Activated naive CD4-positive, alpha-beta T cell treated with anti-CD3 and anti-CD28 coated beads for 36 hours (primary cell): ENCODE measurements at regions of chr4 and their contacts with region 1.

Region 1: GRCh38 chr4:108355186-108355901 is 186.6 kb upstream of the LEF1 start:
- DNase-seq: peak; percentile 76
- H3K4me3 Mint-ChIP-seq: peak overlapping the region; percentile 62
- H3K27ac Mint-ChIP-seq: peak overlapping the region; percentile 88
- H3K4me1 Mint-ChIP-seq: peaks cover 61% of the 10 kb centered on the region
- H3K27me3 Mint-ChIP-seq: no peaks in the 10 kb centered on the region

Region 2: GRCh38 chr4:107843391-107843790 is 512.0 kb before region 1 on chr4:
- CTCF ChIA-PET with region 1: no interaction called
- intact Hi-C with region 1: no loop called
- DNase-seq: no peak
- H3K4me3 Mint-ChIP-seq: no peak overlapping the region
- H3K27ac Mint-ChIP-seq: no peak overlapping the region
- H3K4me1 Mint-ChIP-seq: no peaks in the 10 kb centered on the region
- H3K27me3 Mint-ChIP-seq: peaks cover 7% of the 10 kb centered on the region

Region 3: GRCh38 chr4:108053251-108053711 is 302.1 kb before region 1 on chr4:
- CTCF ChIA-PET with region 1: no interaction called
- intact Hi-C with region 1: loop called (anchors 5 kb)
- DNase-seq: no peak
- H3K4me3 Mint-ChIP-seq: peak overlapping the region; percentile 34
- H3K27ac Mint-ChIP-seq: peak overlapping the region; percentile 93
- H3K4me1 Mint-ChIP-seq: peaks cover 94% of the 10 kb centered on the region
- H3K27me3 Mint-ChIP-seq: no peaks in the 10 kb centered on the region

Region 4: DNA sequence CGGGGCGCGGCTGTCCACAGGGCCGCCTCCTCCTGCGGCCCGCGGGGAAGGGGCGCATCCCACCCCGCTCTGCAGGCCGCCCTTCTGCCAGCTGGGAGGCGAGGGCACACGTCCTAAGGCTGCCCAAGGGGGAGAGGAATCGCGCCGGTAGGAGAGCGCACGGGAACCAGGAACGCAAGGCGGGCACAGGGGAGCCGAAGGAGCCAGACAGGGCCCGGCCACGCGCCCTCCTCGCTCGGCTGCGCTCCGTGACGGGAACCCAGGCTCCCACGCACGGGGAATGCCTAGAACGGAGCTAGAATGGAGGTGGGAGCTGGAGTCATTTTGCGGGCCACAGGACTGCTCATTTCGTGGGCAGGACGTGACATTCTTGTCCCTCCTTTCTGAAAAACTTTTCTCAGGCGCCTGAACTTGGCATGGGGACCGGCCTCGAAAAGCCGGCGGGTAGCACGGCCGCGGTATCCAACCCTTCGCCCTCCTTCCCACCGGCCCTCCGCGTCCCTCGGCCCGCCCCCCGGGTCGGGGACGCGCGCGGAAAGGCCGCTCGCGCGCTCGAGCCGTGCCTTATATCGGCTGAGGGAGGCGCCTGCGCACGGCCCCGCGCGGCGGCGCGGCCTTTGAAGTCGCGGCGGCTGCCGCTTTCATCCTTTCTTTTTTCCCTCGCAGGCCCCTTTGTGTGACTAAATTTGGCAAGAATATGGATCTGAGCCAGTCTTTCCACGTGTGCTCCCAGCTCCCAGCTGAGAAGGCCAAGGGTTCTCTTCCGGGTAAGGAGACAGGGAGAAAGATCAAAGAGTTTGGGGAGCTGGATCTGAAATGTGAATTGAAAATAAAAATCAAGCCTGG is 182.4 kb before region 1 on chr4:
- CTCF ChIA-PET with region 1: interaction called, 3 read pairs
- intact Hi-C with region 1: loop called (anchors 1 kb)
- DNase-seq: peak; percentile 79
- H3K4me3 Mint-ChIP-seq: peak overlapping the region; percentile 91
- H3K27ac Mint-ChIP-seq: peak overlapping the region; percentile 92
- H3K4me1 Mint-ChIP-seq: peaks cover 50% of the 10 kb centered on the region
- H3K27me3 Mint-ChIP-seq: no peaks in the 10 kb centered on the region

Region 5: GRCh38 chr4:108327642-108328382 is 27.5 kb before region 1 on chr4:
- CTCF ChIA-PET with region 1: interaction called, 3 read pairs
- intact Hi-C with region 1: loop called (anchors 1 kb)
- DNase-seq: no peak
- H3K4me3 Mint-ChIP-seq: no peak overlapping the region
- H3K27ac Mint-ChIP-seq: no peak overlapping the region
- H3K4me1 Mint-ChIP-seq: peaks cover 22% of the 10 kb centered on the region
- H3K27me3 Mint-ChIP-seq: no peaks in the 10 kb centered on the region

Region 6: GRCh38 chr4:108425988-108426387 is 70.6 kb after region 1 on chr4:
- CTCF ChIA-PET with region 1: no interaction called
- intact Hi-C with region 1: loop called (anchors 1 kb)
- DNase-seq: no peak
- H3K4me3 Mint-ChIP-seq: no peak overlapping the region
- H3K27ac Mint-ChIP-seq: peak overlapping the region; percentile 48
- H3K4me1 Mint-ChIP-seq: peaks cover 21% of the 10 kb centered on the region
- H3K27me3 Mint-ChIP-seq: no peaks in the 10 kb centered on the region

Region 7: DNA sequence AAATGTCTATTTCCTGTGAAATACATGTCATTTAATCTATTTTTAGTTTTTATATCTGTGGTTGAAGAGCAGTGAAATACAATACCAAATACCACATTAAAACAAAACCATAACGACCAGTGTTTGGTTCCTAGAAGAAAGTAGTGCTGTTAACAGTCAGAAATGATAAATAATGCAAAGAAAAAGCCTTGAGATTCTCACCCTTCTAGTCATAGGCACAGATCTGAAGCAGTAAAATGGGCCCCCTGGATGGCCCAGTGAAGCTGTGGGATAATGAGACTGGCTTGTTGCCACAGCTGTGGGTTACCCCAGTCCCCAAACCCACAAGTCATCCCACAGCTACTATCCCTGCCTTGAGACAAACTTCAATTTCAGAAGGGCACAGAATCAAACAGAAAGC is 127.7 kb after region 1 on chr4:
- CTCF ChIA-PET with region 1: interaction called, 4 read pairs
- intact Hi-C with region 1: loop called (anchors 1 kb)
- DNase-seq: peak; percentile 60
- H3K4me3 Mint-ChIP-seq: peak overlapping the region; percentile 33
- H3K27ac Mint-ChIP-seq: peak overlapping the region; percentile 16
- H3K4me1 Mint-ChIP-seq: peaks cover 33% of the 10 kb centered on the region
- H3K27me3 Mint-ChIP-seq: no peaks in the 10 kb centered on the region

Region 8: DNA sequence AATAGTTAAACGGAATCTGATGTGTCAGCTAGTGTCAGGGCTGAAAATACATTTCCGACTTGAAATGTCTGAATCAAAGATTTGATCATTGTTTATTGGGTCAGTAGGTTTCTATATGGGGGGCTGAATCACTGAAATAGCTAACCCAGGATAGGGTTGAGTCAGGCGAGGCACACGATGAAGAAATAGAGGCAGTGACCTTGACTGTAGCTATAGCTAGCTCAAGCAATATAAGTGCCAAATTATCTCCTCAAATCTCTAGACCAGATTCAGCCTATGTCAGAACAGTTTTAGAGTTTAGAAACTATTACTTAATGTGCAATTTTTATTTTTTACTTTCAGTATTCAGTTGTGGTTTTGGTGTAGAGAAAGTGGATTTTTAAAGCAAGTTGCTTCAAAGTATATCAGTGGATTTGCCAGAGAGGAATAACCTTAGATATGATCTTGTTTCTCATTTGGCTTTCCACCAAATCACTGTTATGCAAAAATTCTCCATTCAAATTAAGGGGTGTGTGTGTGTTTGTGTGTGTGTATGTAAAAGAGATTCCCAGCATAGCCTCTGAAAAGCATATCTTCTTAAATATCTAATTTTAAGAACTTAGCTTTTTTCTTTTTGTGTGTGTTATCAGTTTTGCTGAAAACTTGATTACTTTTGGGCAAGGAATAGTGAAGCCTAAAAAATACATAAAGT is 164.7 kb after region 1 on chr4:
- CTCF ChIA-PET with region 1: no interaction called
- intact Hi-C with region 1: no loop called
- DNase-seq: no peak
- H3K4me3 Mint-ChIP-seq: no peak overlapping the region
- H3K27ac Mint-ChIP-seq: no peak overlapping the region
- H3K4me1 Mint-ChIP-seq: peaks cover 23% of the 10 kb centered on the region
- H3K27me3 Mint-ChIP-seq: no peaks in the 10 kb centered on the region